Caki2 (cell line): ENCODE measurements at regions of chr17 and their contacts with region 1.

Region 1: GRCh38 chr17:65208717-65209116 is 71.5 kb downstream of the RGS9 start:
- DNase-seq: no peak

Region 2: DNA sequence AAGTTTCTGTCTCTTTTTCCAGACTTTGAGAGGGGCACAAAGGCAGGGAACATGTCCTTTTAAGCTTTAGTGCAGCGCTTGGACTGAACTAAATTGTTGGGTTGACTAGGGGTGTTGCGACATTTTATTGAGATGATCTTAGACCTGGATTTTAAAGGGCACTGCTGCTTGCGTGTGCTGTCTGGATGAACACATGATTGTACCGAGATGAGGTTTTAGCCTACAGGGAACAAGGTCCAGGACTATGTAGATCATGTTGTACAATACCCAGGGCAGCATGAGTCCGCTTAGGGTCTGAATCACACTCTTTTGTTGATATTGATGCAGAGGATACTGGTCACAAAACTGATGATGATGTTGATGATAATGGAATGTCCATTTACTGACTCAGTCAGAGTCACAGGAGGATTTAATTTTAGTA is 76.8 kb before region 1 on chr17:
- in situ Hi-C with region 1: loop called (anchors 5 kb)
- DNase-seq: no peak

Region 3: GRCh38 chr17:65371702-65372101 is 163.0 kb after region 1 on chr17:
- in situ Hi-C with region 1: no loop called
- DNase-seq: no peak